RWPE1 (cell line): ENCODE measurements at regions of chr14 and their contacts with region 1.

Region 1: GRCh38 chr14:23120541-23121251 is 1.6 kb upstream of the CEBPE start:
- DNase-seq: peak; percentile 82
- H3K27ac ChIP-seq: peak overlapping the region; percentile 53
- CTCF ChIP-seq: peak; percentile 99

Region 2: DNA sequence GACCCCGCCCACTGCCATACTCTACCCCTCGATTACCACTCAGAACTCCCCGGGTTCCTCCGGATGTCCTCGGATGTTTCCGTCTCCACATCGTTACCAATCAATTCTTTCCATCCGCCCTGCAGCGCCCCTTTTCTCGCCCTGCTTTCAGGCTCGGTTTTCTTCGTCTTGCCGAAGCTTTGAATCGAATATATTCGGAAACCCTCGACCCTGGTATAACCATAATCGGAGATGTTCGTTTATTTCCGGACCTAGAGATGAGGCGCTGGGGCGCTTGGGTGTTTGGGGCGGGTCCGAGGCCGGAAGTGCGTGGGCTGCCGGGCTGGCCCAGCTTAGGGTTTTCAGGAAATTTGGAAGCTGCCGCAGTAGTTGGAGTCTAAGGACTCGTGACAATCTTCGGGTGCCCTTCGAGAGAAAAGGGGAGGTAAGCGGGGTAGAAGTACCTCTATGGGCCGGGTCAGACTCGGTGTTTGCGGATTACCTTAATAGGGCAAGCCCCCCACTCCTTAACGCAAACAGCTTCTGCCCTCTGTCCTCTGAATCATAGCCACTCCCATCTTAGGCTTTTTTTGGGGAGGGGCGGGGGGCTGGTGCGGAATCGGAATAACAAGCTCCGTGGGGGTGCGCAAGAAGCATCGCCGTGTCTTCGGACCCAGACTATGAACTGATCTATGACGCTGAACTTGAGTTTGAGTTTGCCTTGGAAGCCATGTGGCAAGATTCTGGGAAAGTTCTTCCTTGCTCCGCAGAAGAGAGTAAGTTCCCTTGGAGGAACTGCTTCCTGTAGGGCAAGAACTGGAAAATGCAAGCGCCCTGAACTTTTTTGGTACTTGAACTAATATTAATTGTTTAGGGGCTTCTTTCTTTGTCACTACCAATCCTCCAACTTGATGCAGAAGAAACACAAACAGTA is 25.2 kb before region 1 on chr14 and contains the start of gene C14orf119:
- CTCF ChIA-PET with region 1: interaction called, 11 read pairs
- POLR2A ChIA-PET with region 1: no interaction called
- DNase-seq: peak; percentile 100
- H3K27ac ChIP-seq: peak within 1 kb of the TSS; percentile 96
- CTCF ChIP-seq: no peak

Region 3: DNA sequence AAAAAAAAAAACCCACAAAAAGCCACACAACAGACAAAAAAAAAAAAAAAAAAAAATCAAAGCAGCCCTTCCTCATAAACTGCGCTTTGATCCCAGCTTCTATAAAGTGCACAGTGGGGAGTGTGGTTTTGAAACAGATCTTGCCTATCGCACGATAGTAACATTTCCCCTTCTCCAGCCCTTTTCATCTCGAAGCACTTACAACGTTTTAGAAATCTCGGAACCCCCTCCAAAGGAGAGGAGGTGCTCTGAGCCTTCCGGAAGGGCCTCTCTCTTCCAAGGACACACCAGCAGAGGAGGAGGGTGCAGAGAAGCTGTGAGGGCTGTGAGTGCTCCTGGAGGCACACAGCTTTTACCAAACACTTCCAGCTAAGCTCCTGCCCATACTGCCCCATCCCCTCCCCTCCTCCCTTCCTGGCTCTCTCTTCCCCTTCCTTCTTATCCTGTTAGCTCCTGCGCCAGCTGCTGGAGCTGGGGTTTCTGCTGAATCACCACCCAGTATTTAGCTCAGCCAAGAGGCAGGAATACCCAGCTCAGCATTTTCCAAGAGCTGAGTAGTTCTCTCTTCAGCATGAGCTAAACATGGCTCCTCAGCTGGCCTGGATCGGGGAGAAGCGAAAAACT is 34.4 kb after region 1 on chr14:
- CTCF ChIA-PET with region 1: interaction called, 11 read pairs
- POLR2A ChIA-PET with region 1: no interaction called
- DNase-seq: peak; percentile 76
- H3K27ac ChIP-seq: peak overlapping the region; percentile 98
- CTCF ChIP-seq: no peak

Region 4: DNA sequence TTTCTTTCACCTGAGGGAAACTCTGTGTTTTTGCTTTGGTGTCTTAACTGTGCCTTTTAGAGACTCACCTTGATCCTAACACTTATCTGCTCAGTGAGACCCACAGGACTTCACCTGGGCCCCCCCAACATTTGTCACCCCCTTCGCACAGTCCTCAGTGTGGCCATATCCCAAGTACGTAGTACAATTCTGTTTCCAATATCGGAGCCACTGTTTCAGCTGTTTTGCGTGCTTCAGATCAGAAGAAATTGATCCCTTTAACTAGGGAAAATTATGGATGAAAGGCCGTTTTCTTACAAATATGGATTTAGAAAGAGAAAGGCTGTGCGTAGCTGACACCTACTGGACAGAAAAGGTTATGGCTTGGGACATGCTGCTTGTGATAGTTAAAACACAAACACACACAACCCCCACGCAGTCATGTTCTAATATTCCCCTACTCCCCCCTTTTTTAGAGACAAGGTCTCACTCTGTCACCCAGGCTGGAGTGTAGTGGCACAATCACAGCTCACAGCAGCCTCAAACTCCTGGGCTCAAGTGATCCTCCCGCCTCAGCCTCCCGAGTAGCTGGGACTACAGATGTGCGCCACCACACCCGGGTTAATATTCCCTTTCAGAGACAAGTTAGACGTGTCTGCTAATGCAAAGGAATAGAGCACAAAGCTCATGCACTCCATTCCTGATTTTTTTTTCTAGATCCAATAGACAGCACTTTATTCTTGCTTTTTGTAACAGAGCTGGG is 66.4 kb after region 1 on chr14:
- CTCF ChIA-PET with region 1: interaction called, 78 read pairs
- POLR2A ChIA-PET with region 1: no interaction called
- DNase-seq: peak; percentile 65
- H3K27ac ChIP-seq: no peak overlapping the region
- CTCF ChIP-seq: peak; percentile 81